Caco-2 (cell line): ENCODE measurements at regions of chr16 and their contacts with region 1.

Region 1: DNA sequence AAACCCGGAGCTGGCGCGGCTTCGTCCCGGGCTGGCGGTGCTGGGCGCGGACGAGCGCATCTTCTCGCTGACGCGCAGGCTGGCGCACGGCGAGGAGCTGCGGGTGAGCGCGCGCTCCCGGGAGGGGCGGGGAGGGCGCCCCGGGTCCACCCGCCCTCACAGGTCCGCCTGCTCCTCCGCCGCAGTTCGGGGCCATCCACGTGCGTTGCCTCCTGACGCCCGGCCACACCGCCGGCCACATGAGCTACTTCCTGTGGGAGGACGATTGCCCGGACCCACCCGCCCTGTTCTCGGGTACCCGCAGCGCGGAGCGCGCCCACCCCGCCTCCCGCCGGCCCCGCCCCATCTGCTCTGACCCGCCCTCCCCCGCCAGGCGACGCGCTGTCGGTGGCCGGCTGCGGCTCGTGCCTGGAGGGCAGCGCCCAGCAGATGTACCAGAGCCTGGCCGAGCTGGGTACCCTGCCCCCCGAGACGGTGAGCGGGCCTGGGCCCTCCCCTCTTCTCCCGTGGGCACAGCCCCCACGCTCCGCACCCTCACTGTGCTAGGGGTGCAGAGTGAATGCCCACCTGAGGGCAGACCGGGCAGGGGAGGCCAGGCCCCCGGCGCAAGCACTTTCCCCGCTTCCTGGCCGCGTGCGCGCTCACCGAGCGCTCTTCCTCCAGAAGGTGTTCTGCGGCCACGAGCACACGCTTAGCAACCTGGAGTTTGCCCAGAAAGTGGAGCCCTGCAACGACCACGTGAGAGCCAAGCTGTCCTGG is 1.4 kb downstream of the HAGHL start:
- DNase-seq: peak; percentile 72 to 86
- H3K4me3 ChIP-seq: peak overlapping the region; percentile 65
- H3K4me3 Mint-ChIP-seq: peak overlapping the region; percentile 64
- H3K27ac Mint-ChIP-seq: no peak overlapping the region
- H3K4me1 ChIP-seq: peaks cover 3% of the 10 kb centered on the region; the same call in 1 of the 2 replicates
- H3K4me1 Mint-ChIP-seq: no peaks in the 10 kb centered on the region
- H3K27me3 ChIP-seq: no peaks in the 10 kb centered on the region
- H3K27me3 Mint-ChIP-seq: no peaks in the 10 kb centered on the region
- CTCF ChIP-seq: no peak

Region 2: GRCh38 chr16:714558-715476 is 13.5 kb before region 1 on chr16 and contains the start of gene METRN:
- CTCF ChIA-PET with region 1: interaction called, 10 read pairs
- POLR2A ChIA-PET with region 1: interaction called, 4 read pairs
- intact Hi-C with region 1: no loop called
- DNase-seq: peak; percentile 84 to 94
- H3K4me3 ChIP-seq: peak within 1 kb of the TSS; percentile 71
- H3K4me3 Mint-ChIP-seq: peak within 1 kb of the TSS; percentile 66
- H3K27ac Mint-ChIP-seq: no peak within 1 kb of the TSS
- H3K4me1 ChIP-seq: peaks cover 31% of the 10 kb centered on the region
- H3K4me1 Mint-ChIP-seq: peaks cover 7% of the 10 kb centered on the region
- H3K27me3 ChIP-seq: no peaks in the 10 kb centered on the region
- H3K27me3 Mint-ChIP-seq: no peaks in the 10 kb centered on the region
- CTCF ChIP-seq: no peak
- total RNA-seq, gene METRN: 20.0 and 23.4 TPM in 2 replicates

Region 3: GRCh38 chr16:931626-932500 is 203.6 kb after region 1 on chr16:
- CTCF ChIA-PET with region 1: no interaction called
- POLR2A ChIA-PET with region 1: no interaction called
- intact Hi-C with region 1: no loop called
- DNase-seq: no peak
- H3K4me3 ChIP-seq: no peak overlapping the region
- H3K4me3 Mint-ChIP-seq: no peak overlapping the region
- H3K27ac Mint-ChIP-seq: no peak overlapping the region
- H3K4me1 ChIP-seq: no peaks in the 10 kb centered on the region
- H3K4me1 Mint-ChIP-seq: no peaks in the 10 kb centered on the region
- H3K27me3 ChIP-seq: no peaks in the 10 kb centered on the region
- H3K27me3 Mint-ChIP-seq: no peaks in the 10 kb centered on the region
- CTCF ChIP-seq: no peak